ENCODE measurements at regions of chr12 and their contacts with region 1.

Region 1: GRCh38 chr12:127108360-127109215 is 1158.4 kb upstream of the TMEM132C start:
- DNase-seq: peak in 1 of 2 donors; percentile 32
- ATAC-seq: peak in 2 of 3 donors; percentile 57 to 68
- H3K4me3 ChIP-seq: no peak overlapping the region
- H3K4me3 Mint-ChIP-seq: no peak overlapping the region
- H3K27ac ChIP-seq: no peak overlapping the region
- H3K27ac Mint-ChIP-seq: no peak overlapping the region
- H3K4me1 ChIP-seq: no peaks in the 10 kb centered on the region
- H3K4me1 Mint-ChIP-seq: no peaks in the 10 kb centered on the region
- H3K27me3 ChIP-seq: no peaks in the 10 kb centered on the region
- H3K27me3 Mint-ChIP-seq: peaks cover 4 to 9% of the 10 kb centered on the region in 2 donors
- CTCF ChIP-seq: peak; percentile 55

Region 2: DNA sequence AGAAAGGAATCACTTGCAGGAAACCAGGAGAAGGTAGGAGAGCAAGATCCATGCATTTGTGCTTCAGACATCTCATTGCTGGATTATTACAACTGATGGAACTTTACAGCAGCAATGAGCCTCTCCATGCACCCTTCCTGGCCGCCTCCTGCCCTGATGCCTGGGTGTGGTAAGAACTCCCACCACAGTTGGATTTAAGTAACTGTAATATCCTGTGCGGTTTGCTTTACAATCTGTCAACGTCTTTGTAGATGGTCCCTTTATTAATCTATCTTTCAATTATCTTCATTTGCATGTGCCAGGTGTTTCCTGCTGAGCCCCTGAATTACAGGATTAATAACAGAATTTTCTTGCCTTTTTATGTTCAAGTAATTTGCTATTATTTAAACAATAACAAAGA is 142.1 kb before region 1 on chr12:
- intact Hi-C with region 1: no loop called
- DNase-seq: no peak
- ATAC-seq: no peak
- H3K4me3 ChIP-seq: no peak overlapping the region
- H3K4me3 Mint-ChIP-seq: no peak overlapping the region
- H3K27ac ChIP-seq: no peak overlapping the region
- H3K27ac Mint-ChIP-seq: no peak overlapping the region
- H3K4me1 ChIP-seq: no peaks in the 10 kb centered on the region
- H3K4me1 Mint-ChIP-seq: no peaks in the 10 kb centered on the region
- H3K27me3 ChIP-seq: no peaks in the 10 kb centered on the region
- H3K27me3 Mint-ChIP-seq: no peaks in the 10 kb centered on the region
- CTCF ChIP-seq: no peak

Region 3: GRCh38 chr12:127293507-127294310 is 185.1 kb after region 1 on chr12:
- intact Hi-C with region 1: loop called (anchors 1 kb)
- DNase-seq: peak; percentile 21 to 24
- ATAC-seq: peak; percentile 66 to 77 (median 71)
- H3K4me3 ChIP-seq: no peak overlapping the region
- H3K4me3 Mint-ChIP-seq: no peak overlapping the region
- H3K27ac ChIP-seq: no peak overlapping the region
- H3K27ac Mint-ChIP-seq: no peak overlapping the region
- H3K4me1 ChIP-seq: no peaks in the 10 kb centered on the region
- H3K4me1 Mint-ChIP-seq: no peaks in the 10 kb centered on the region
- H3K27me3 ChIP-seq: no peaks in the 10 kb centered on the region
- H3K27me3 Mint-ChIP-seq: no peaks in the 10 kb centered on the region
- CTCF ChIP-seq: peak; percentile 39

Region 4: GRCh38 chr12:127381048-127381668 is 272.6 kb after region 1 on chr12:
- intact Hi-C with region 1: loop called (anchors 2 kb)
- DNase-seq: peak; percentile 7 to 16
- ATAC-seq: peak in 2 of 3 donors; percentile 50 to 52
- H3K4me3 ChIP-seq: no peak overlapping the region
- H3K4me3 Mint-ChIP-seq: no peak overlapping the region
- H3K27ac ChIP-seq: no peak overlapping the region
- H3K27ac Mint-ChIP-seq: no peak overlapping the region
- H3K4me1 ChIP-seq: no peaks in the 10 kb centered on the region
- H3K4me1 Mint-ChIP-seq: no peaks in the 10 kb centered on the region
- H3K27me3 ChIP-seq: no peaks in the 10 kb centered on the region
- H3K27me3 Mint-ChIP-seq: peaks cover 0 to 3% of the 10 kb centered on the region in 2 donors
- CTCF ChIP-seq: peak; percentile 42

Region 5: DNA sequence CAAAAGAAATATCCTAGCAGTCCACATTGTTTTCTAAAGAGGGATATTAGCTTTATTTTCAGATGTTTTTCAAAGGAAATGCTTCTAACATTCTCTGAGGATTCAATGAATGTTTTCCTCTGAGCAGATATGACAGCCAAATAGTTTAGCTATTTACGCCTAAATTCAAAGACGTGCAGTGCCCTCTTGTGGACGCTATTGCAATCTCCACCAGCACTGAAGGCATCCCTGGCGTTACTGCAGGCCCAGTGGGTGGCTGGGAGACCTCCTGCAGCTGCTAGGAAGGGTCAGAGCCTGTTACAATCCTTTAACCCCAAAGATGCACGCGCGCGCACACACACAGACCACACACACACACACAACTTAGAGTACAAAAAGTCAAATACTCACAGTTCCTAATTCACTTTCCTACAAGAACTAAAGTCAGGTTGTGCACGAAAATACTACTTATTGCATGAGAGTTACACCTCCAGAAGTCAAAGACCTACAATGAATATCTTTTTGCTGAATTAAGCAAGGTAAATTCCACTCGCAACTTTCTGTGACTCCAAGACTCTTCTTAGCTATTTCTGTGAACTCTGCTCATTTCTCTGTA is 569.0 kb after region 1 on chr12:
- intact Hi-C with region 1: loop called (anchors 10 kb)
- DNase-seq: peak in 1 of 2 donors; percentile 41
- ATAC-seq: no peak
- H3K4me3 ChIP-seq: no peak overlapping the region
- H3K4me3 Mint-ChIP-seq: no peak overlapping the region
- H3K27ac ChIP-seq: no peak overlapping the region
- H3K27ac Mint-ChIP-seq: no peak overlapping the region
- H3K4me1 ChIP-seq: no peaks in the 10 kb centered on the region
- H3K4me1 Mint-ChIP-seq: no peaks in the 10 kb centered on the region
- H3K27me3 ChIP-seq: no peaks in the 10 kb centered on the region
- H3K27me3 Mint-ChIP-seq: no peaks in the 10 kb centered on the region
- CTCF ChIP-seq: no peak